ENCODE measurements at regions of chr16 and their contacts with region 1.

Region 1: DNA sequence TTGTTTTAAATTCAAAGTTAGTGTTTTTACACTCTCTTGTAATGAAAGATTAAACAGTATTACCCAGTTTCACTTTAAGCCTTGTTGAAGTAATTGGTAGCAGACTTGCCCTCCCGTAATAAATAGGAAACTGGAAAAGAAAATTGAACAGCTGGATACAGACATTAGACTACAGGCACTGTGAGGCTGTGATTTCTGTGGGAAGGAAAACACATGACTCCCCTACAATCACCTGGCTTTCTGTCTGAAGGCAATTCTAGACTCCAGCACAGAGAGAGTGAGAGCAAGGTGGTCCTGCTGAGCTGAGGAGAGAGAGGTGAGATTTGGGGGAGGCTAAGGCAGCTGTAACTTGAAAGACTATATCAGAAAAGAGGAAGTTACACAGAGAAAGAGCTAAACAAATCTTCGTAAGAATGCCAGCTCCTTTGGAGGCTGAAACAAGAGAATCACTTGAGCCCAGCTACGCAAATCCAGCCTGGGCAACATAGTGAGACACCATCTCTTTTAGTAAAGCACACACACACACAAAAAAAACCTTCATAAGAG is 57.8 kb upstream of the CDYL2 start:
- DNase-seq: no peak
- ATAC-seq: no peak
- H3K4me3 ChIP-seq: no peak overlapping the region
- H3K4me3 Mint-ChIP-seq: no peak overlapping the region
- H3K27ac ChIP-seq: no peak overlapping the region
- H3K27ac Mint-ChIP-seq: no peak overlapping the region
- H3K4me1 ChIP-seq: no peaks in the 10 kb centered on the region
- H3K4me1 Mint-ChIP-seq: no peaks in the 10 kb centered on the region
- H3K27me3 ChIP-seq: peaks cover 7 to 8% of the 10 kb centered on the region in 2 experiments
- H3K27me3 Mint-ChIP-seq: peaks cover 27% of the 10 kb centered on the region
- CTCF ChIP-seq: no peak

Region 2: DNA sequence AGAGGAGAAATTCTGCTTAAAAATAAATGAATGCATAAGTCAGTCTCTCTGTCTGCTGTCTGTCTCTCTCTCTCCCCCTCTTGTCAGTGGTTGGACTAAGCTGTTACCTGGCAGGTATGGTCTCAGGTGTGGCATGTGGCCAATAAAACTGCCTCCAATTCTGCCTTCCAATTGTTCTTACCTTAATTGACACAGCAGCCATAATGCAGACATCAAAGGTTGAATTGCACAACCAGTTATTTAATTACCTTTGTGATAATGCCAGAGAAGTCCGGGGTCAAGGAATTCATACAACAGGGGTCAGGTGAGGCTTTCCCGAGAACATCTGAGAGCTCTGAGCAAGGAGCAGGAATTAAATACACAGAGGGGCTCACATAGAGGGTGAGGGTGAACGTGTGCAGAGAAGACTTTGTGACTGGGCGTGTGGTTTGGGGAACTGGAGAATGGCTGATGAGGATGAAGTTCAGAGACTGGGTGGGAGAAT is 21.0 kb after region 1 on chr16:
- CTCF ChIA-PET with region 1: no interaction called
- POLR2A ChIA-PET with region 1: no interaction called
- intact Hi-C with region 1: loop called in 1 of 2 experiments (anchors 2 kb)
- DNase-seq: no peak
- ATAC-seq: no peak
- H3K4me3 ChIP-seq: no peak overlapping the region
- H3K4me3 Mint-ChIP-seq: no peak overlapping the region
- H3K27ac ChIP-seq: no peak overlapping the region
- H3K27ac Mint-ChIP-seq: no peak overlapping the region
- H3K4me1 ChIP-seq: no peaks in the 10 kb centered on the region
- H3K4me1 Mint-ChIP-seq: no peaks in the 10 kb centered on the region
- H3K27me3 ChIP-seq: peaks cover 0 to 3% of the 10 kb centered on the region in 2 experiments
- H3K27me3 Mint-ChIP-seq: peaks cover 35% of the 10 kb centered on the region
- CTCF ChIP-seq: no peak

Region 3: GRCh38 chr16:81174654-81175571 is 312.7 kb after region 1 on chr16:
- CTCF ChIA-PET with region 1: no interaction called
- POLR2A ChIA-PET with region 1: no interaction called
- intact Hi-C with region 1: no loop called
- DNase-seq: no peak
- ATAC-seq: no peak
- H3K4me3 ChIP-seq: no peak overlapping the region
- H3K4me3 Mint-ChIP-seq: no peak overlapping the region
- H3K27ac ChIP-seq: no peak overlapping the region
- H3K27ac Mint-ChIP-seq: no peak overlapping the region
- H3K4me1 ChIP-seq: no peaks in the 10 kb centered on the region
- H3K4me1 Mint-ChIP-seq: no peaks in the 10 kb centered on the region
- H3K27me3 ChIP-seq: peaks cover 2 to 5% of the 10 kb centered on the region in 2 experiments
- H3K27me3 Mint-ChIP-seq: peaks cover 16% of the 10 kb centered on the region
- CTCF ChIP-seq: no peak